Mammary epithelial cell (primary cell): ENCODE measurements at regions of chr2 and their contacts with region 1.

Region 1: GRCh38 chr2:156892467-156893281 is 364.8 kb upstream of the GALNT5 start:
- DNase-seq: peak; percentile 86
- H3K4me3 ChIP-seq: peak overlapping the region; percentile 38 to 45 (median 42)
- H3K27ac ChIP-seq: no peak overlapping the region
- H3K4me1 ChIP-seq: peaks cover 23% of the 10 kb centered on the region
- H3K27me3 ChIP-seq: no peaks in the 10 kb centered on the region
- CTCF ChIP-seq: peak; percentile 67 to 69

Region 2: GRCh38 chr2:155377266-155377680 is 1515.4 kb before region 1 on chr2:
- CTCF ChIA-PET with region 1: no interaction called
- dilution Hi-C with region 1: no loop called
- in situ Hi-C with region 1: no loop called
- intact Hi-C with region 1: loop called (anchors 1 kb)
- DNase-seq: peak; percentile 5
- H3K4me3 ChIP-seq: no peak overlapping the region
- H3K27ac ChIP-seq: no peak overlapping the region
- H3K4me1 ChIP-seq: no peaks in the 10 kb centered on the region
- H3K27me3 ChIP-seq: no peaks in the 10 kb centered on the region
- CTCF ChIP-seq: peak; percentile 19 to 40

Region 3: GRCh38 chr2:156332534-156333273 is 560.0 kb before region 1 on chr2 and contains the start of gene NR4A2:
- CTCF ChIA-PET with region 1: interaction called, 3 read pairs
- dilution Hi-C with region 1: no loop called
- in situ Hi-C with region 1: loop called in 1 of 2 experiments (anchors 25 kb)
- intact Hi-C with region 1: loop called (anchors 1 kb)
- DNase-seq: peak; percentile 92
- H3K4me3 ChIP-seq: peak within 1 kb of the TSS; percentile 66 to 86 (median 80)
- H3K27ac ChIP-seq: peak within 1 kb of the TSS; percentile 95
- H3K4me1 ChIP-seq: peaks cover 23% of the 10 kb centered on the region
- H3K27me3 ChIP-seq: no peaks in the 10 kb centered on the region
- CTCF ChIP-seq: no peak
- total RNA-seq, gene NR4A2: 0.50 to 1.3 TPM

Region 4: DNA sequence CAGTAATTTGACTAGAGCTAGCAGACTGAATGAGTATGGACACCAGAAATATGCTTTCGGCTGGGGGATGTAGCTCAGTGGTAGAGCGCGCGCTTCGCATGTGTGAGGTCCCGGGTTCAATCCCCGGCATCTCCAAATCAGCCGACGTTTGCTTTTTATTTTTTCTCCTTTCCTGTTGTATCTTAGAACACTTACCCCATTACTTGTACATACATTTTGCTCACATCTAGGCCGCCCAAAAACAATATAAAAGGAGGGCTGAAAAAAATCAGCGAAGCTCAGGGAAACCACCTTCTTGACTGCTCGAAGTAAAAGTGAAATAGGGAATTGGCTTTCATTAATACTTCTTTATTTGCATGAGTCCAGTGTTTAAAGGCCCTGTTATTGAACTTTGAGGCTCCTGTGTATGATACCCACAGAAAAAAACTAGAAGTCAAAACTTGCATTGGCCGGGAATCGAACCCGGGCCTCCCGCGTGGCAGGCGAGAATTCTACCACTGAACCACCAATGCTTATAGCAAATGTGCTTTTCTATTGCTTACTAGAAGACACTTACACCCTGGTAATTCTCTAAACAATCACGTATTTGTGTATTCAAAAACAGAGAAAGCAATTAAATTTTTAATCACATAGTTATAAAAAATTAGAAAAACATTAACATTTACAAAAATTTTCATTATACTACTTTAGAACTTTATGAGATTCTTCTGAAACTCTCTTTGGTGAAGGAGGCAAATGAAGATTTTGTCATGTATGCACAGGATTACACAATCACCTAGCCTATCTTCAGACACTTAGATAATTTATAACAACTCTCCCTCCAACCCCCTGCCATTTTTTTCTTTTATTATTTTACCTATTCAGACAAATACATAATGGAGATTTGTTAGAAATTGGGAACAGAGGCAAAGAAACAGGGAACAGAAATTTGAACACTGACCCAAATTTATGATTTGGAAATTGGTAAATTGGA is 491.7 kb before region 1 on chr2:
- CTCF ChIA-PET with region 1: no interaction called
- dilution Hi-C with region 1: no loop called
- in situ Hi-C with region 1: no loop called
- intact Hi-C with region 1: loop called (anchors 2 kb)
- DNase-seq: peak; percentile 77
- H3K4me3 ChIP-seq: peak overlapping the region; percentile 56 to 90 (median 76)
- H3K27ac ChIP-seq: peak overlapping the region; percentile 78
- H3K4me1 ChIP-seq: peaks cover 16% of the 10 kb centered on the region
- H3K27me3 ChIP-seq: no peaks in the 10 kb centered on the region
- CTCF ChIP-seq: no peak

Region 5: DNA sequence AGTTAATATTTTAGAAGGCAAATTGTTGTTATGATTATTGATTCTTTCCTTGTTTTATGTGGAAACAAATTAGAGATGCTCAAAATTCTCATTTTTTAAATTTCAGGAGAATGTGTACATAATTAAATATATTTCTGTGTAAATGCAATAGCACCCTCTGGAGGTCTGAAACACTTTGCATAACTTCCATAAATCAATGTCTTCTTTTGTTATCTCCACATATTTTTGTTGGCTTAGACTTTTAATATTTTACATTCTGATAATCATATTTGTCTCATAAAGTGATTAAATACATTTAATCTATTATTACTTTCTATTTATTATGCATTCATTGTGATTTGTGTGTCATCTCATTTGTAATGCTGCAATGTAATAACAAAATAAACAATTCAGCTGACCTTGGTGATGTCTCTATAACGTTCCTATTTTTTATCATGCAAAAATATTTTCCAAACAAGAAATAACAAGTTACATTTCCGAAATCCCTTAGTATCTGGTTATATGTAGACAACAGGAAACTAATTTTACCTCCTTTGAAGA is 163.1 kb after region 1 on chr2:
- CTCF ChIA-PET with region 1: interaction called, 6 read pairs
- dilution Hi-C with region 1: no loop called
- in situ Hi-C with region 1: no loop called
- intact Hi-C with region 1: loop called (anchors 1 kb)
- DNase-seq: peak; percentile 25
- H3K4me3 ChIP-seq: no peak overlapping the region
- H3K27ac ChIP-seq: no peak overlapping the region
- H3K4me1 ChIP-seq: peaks cover 16% of the 10 kb centered on the region
- H3K27me3 ChIP-seq: peaks cover 3% of the 10 kb centered on the region
- CTCF ChIP-seq: peak; percentile 56 to 58